ENCODE measurements at regions of chr10 and their contacts with region 1.

Region 1: DNA sequence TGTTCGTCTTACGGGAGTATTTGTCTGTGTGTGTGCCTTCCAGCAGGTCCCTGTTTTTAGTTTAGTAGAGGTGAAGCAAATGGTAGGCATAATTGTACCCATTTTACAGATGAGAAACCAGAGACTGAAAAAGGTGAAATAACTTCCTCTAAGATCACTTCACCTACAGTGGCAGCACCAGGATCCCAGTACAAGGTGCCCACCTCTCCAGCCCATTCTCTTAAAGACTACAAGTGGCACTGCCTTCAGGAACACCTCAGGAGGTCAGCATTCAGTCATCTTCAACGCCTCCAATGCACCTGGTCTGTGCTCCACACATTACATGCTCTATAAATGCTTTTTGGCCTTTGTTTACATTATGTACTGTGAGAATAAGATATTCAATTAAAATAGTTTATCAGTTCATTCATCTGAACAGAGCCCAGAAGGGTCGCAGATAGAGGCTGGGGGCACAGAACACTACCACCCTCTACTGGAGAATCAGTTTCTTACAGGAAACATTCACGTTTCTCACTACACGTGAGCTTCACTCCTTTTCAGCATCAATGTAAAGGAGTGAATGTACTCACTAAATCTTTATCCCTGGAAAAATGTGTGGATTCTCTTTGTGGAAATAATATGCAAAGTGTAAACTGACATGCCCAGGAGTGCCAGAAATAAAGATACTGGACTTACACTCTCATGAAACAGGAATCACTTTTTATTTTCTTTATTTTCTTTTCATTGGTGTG is 45.5 kb upstream of the ABLIM1 start:
- DNase-seq: peak in 1 of 2 donors; percentile 20
- H3K4me3 ChIP-seq: no peak overlapping the region
- H3K27ac ChIP-seq: no peak overlapping the region
- H3K4me1 ChIP-seq: peaks cover 0 to 5% of the 10 kb centered on the region in 2 donors
- H3K27me3 ChIP-seq: no peaks in the 10 kb centered on the region
- CTCF ChIP-seq: peak; percentile 58 to 88 (median 68)
- POLR2A ChIP-seq: no peak

Region 2: DNA sequence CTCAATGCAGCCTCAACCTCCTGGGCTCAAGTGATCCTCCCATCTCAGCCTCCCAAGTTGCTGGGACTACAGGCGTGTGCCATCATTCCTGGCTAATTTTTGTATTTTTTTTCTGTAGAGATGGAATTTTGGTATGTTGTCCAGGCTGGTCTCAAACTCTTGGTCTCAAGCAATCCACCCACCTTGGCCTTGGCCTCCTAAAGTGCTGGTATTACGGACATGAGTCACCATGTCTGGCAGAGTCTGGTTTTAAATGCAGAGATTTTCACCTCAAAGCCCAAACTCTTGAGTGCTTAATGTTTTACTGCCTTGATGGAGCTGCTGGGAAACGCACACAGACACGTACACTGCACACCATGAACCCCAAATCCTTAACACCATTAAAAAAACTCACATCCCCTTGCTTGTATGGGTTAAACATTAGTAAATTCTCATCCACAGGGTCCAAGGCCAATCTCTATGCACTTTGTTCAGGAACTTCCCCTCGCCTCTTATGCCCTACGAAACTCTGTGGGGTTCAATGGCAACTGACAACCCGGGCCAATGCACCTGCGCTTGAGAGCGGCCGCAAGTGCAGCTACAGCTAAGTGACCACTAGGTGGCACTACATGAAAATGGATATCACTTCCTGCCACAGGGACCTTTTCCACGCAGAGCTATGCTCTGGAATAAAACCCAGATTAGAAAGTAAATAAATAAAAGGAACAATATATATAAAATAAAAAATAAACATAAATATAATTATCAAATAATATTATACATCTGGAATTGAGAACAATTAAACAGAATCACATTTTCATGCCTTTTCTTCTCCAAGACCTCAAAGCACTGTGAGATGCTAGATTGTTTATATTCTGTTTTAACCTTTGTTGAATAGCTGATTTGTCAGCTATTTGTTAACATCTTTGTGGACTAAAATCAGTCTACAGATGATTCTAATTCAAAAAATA is 232.3 kb before region 1 on chr10:
- intact Hi-C with region 1: loop called (anchors 10 kb)
- DNase-seq: peak; percentile 66 to 67
- H3K4me3 ChIP-seq: no peak overlapping the region
- H3K27ac ChIP-seq: peak overlapping the region; percentile 45 to 100 (median 46)
- H3K4me1 ChIP-seq: peaks cover 28 to 39% of the 10 kb centered on the region in 2 donors
- H3K27me3 ChIP-seq: no peaks in the 10 kb centered on the region
- CTCF ChIP-seq: peak; percentile 78 to 89 (median 84)
- POLR2A ChIP-seq: no peak

Region 3: GRCh38 chr10:114645729-114646128 is 57.8 kb before region 1 on chr10:
- intact Hi-C with region 1: no loop called
- DNase-seq: no peak
- H3K4me3 ChIP-seq: no peak overlapping the region
- H3K27ac ChIP-seq: no peak overlapping the region
- H3K4me1 ChIP-seq: peaks cover 7 to 19% of the 10 kb centered on the region in 2 donors
- H3K27me3 ChIP-seq: no peaks in the 10 kb centered on the region
- CTCF ChIP-seq: no peak
- POLR2A ChIP-seq: no peak

Region 4: DNA sequence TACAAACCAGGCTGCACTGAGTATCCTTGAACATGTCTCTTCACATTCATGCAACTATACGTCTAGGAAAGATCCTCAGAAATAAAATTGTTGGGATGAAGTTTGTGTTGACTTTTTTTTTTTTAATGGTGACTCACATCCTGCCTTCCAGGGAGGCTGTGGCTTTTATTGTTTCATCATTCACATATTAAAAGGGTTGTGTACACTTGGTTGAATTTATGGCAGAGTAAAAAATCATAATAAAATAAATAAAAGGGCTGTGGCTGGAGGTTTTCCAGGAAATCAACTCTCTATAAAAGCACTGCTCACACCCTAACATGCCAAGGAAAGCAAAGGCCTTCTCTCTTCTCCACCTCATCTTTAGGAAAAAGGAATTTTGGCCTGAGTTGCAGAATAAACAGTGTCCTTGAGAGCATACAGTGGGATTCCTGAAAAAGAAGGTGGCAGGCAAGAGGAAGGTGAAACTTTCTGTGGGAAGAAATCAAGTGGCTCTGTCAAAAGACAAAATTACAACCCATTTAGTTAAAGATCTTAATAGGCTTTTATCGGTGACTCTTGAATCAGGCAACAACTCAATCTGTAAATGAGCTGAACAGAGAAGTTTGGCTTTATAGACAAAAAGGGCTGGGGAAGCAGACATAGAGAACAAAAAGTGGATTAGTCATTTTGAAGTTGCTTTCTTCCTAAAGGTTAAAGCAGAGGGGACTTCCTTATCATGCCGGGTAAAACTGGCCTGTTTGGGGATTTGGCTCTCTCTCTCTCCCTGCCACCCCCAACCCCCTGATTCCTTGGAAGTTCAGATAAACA is 76.5 kb after region 1 on chr10:
- intact Hi-C with region 1: loop called (anchors 10 kb)
- DNase-seq: no peak
- H3K4me3 ChIP-seq: no peak overlapping the region
- H3K27ac ChIP-seq: peak overlapping the region; percentile 62 to 75 (median 63)
- H3K4me1 ChIP-seq: peaks cover 9 to 17% of the 10 kb centered on the region in 2 donors
- H3K27me3 ChIP-seq: no peaks in the 10 kb centered on the region
- CTCF ChIP-seq: no peak
- POLR2A ChIP-seq: no peak

Region 5: GRCh38 chr10:114911052-114911711 is 207.6 kb after region 1 on chr10:
- intact Hi-C with region 1: no loop called
- DNase-seq: no peak
- H3K4me3 ChIP-seq: no peak overlapping the region
- H3K27ac ChIP-seq: no peak overlapping the region
- H3K4me1 ChIP-seq: no peaks in the 10 kb centered on the region
- H3K27me3 ChIP-seq: no peaks in the 10 kb centered on the region
- CTCF ChIP-seq: no peak
- POLR2A ChIP-seq: no peak

Measured in thyroid gland (tissue), 4 donors.